Posterior vena cava (tissue), 2 donors: ENCODE measurements at regions of chr4 and their contacts with region 1.

Region 1: DNA sequence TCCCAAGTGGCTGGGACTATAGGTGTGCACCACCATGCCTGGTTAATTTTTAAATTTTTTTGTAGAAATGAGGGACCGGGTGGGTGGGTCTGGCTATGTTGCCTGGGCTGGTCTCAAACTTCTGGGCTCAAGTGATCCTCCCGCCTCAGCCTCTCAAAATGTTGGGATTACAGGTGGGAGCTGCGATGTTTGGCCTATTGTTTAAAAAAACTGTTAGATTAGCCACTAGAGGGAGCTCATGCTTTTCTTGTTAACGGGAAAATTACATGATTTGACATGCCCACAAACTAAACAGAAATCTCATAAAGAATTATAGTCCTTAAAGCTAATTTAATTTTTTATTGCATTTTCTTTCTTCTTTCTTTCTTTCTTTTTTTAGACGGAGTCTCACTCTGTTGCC is 5.0 kb upstream of the SDAD1 start:
- DNase-seq: no peak

Region 2: DNA sequence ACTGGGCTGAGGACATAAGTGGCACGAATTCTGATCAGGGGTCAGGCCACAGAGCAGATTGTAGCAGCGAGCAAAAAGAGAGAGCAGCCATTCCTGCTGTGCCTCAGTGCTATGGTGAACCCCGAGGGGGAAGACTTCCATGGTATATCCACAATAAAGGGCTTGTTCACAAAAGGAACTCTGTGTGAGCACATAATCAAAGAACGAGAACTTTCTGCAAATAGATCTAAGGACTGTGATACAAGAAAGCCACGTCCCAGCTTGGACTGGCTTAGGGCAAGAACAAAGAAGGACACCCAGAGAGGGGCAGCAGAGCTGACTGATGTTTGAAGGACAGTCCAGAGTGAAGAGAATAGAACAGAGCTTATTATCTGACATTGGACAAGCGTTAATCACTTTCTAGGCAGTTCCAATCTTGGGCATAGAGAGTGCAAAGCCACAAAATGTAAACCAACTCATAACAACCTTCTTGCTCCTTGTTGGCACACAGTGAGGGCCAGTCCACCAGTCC is 117.4 kb before region 1 on chr4:
- intact Hi-C with region 1: no loop called
- DNase-seq: peak; percentile 17

Region 3: DNA sequence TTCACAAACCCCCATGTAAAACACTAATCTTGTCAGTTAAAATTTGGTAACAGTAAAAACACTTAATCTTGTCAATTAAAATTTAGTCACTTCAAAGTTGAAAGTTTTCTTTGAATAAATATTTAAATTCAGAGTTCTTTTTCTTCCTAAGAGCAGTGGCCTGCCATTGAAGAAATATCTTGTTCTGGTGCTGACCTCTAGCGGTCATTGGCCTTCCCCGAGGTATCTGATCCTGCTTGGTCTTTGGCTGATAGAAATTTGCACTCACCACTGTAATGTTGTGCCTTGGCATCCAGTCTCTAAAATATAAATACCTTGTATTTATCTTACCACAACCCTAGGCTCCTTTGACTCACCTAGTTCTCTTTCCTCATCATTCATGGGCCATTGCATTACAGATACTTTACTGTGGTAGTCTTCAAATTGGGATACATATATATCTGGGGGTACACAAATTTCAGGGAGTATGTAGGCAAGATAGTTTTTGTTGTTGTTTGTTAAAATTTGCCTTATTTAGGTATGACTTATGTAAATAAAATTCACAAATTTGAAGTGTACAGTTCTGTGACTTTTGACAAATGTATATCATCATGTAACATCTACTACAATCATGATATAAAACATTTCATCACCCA is 72.0 kb after region 1 on chr4:
- intact Hi-C with region 1: loop called (anchors 5 kb)
- DNase-seq: peak; percentile 83

Region 4: GRCh38 chr4:76074468-76074867 is 78.7 kb after region 1 on chr4 and contains the start of gene ART3:
- intact Hi-C with region 1: loop called (anchors 5 kb)
- DNase-seq: no peak
- total RNA-seq, gene ART3: 0.37 TPM in 1 of 2 donors, not detected in the other